ENCODE measurements at regions of chr17 and their contacts with region 1.

Region 1: DNA sequence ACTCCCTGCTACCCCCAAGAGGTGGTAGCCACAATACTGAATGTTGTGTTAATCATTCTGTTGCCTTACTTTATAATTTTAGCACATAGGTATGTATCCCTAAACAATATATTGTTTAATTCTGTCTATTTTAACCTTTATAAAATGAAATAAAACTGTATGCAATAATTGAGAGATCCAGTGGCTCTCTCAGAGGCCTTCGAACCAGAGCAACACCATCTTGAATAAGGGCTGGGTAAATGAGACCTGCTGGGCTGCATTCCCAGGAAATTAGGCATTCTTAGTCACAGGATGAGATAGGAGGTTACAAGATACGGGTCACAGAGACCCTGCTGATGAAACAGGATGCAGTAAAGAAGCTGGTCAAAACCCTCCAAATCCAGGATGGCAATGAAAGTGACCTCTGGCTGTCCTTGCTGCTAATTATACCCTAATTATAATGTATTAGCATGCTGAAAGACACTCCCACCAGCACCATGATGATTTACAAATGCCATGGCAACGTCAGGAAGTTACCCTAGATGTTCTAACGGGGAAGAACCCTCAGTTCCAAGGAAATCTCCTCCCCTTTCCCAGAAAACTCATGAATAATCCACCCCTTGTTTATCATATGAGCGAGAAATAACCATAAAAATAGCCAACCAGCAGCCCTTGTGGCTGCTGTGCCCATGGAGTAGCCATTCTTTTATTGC is 2.0 kb upstream of the CANT1 start:
- DNase-seq: no peak
- ATAC-seq: no peak
- H3K4me3 ChIP-seq: no peak overlapping the region
- H3K4me3 Mint-ChIP-seq: peak overlapping the region; percentile 93
- H3K27ac ChIP-seq: no peak overlapping the region
- H3K27ac Mint-ChIP-seq: peak overlapping the region; percentile 91
- H3K4me1 ChIP-seq: peaks cover 35% of the 10 kb centered on the region
- H3K4me1 Mint-ChIP-seq: peaks cover 33% of the 10 kb centered on the region
- H3K27me3 ChIP-seq: peaks cover 0 to 2% of the 10 kb centered on the region in 2 experiments
- H3K27me3 Mint-ChIP-seq: peaks cover under 1% of the 10 kb centered on the region
- CTCF ChIP-seq: no peak

Region 2: GRCh38 chr17:79074650-79075445 is 63.2 kb after region 1 on chr17 and contains the start of gene ENGASE:
- CTCF ChIA-PET with region 1: no interaction called
- POLR2A ChIA-PET with region 1: interaction called, 3 read pairs
- intact Hi-C with region 1: loop called in 1 of 2 experiments (anchors 2 kb)
- DNase-seq: peak; percentile 81 to 96 (median 89)
- ATAC-seq: peak; percentile 92
- H3K4me3 ChIP-seq: peak within 1 kb of the TSS; percentile 61
- H3K4me3 Mint-ChIP-seq: peak within 1 kb of the TSS; percentile 92
- H3K27ac ChIP-seq: peak within 1 kb of the TSS; percentile 26 to 56
- H3K27ac Mint-ChIP-seq: peak within 1 kb of the TSS; percentile 81
- H3K4me1 ChIP-seq: peaks cover 28% of the 10 kb centered on the region
- H3K4me1 Mint-ChIP-seq: peaks cover 20% of the 10 kb centered on the region
- H3K27me3 ChIP-seq: no peaks in the 10 kb centered on the region
- H3K27me3 Mint-ChIP-seq: no peaks in the 10 kb centered on the region
- CTCF ChIP-seq: no peak
- total RNA-seq, gene ENGASE: 49.8 to 50.9 TPM

Region 3: GRCh38 chr17:79294459-79295071 is 283.0 kb after region 1 on chr17:
- CTCF ChIA-PET with region 1: no interaction called
- POLR2A ChIA-PET with region 1: no interaction called
- intact Hi-C with region 1: no loop called
- DNase-seq: peak; percentile 8 to 63 (median 22)
- ATAC-seq: no peak
- H3K4me3 ChIP-seq: no peak overlapping the region
- H3K4me3 Mint-ChIP-seq: no peak overlapping the region
- H3K27ac ChIP-seq: no peak overlapping the region
- H3K27ac Mint-ChIP-seq: no peak overlapping the region
- H3K4me1 ChIP-seq: no peaks in the 10 kb centered on the region
- H3K4me1 Mint-ChIP-seq: no peaks in the 10 kb centered on the region
- H3K27me3 ChIP-seq: peaks cover 12 to 25% of the 10 kb centered on the region in 2 experiments
- H3K27me3 Mint-ChIP-seq: peaks cover 64% of the 10 kb centered on the region
- CTCF ChIP-seq: no peak